ENCODE measurements at regions of chr10 and their contacts with region 1.

Region 1: GRCh38 chr10:2839081-2839725 is 228.1 kb upstream of the PFKP start:
- DNase-seq: peak; percentile 48
- H3K4me3 ChIP-seq: no peak overlapping the region
- H3K27ac ChIP-seq: no peak overlapping the region
- H3K4me1 ChIP-seq: no peaks in the 10 kb centered on the region
- H3K27me3 ChIP-seq: peaks cover 0 to 3% of the 10 kb centered on the region in 2 experiments
- CTCF ChIP-seq: peak; percentile 76 to 78
- POLR2A ChIP-seq: no peak

Region 2: GRCh38 chr10:2978111-2978510 is 138.9 kb after region 1 on chr10:
- CTCF ChIA-PET with region 1: interaction called, 43 read pairs
- POLR2A ChIA-PET with region 1: no interaction called
- dilution Hi-C with region 1: no loop called
- intact Hi-C with region 1: loop called (anchors 1 kb)
- DNase-seq: peak; percentile 61
- H3K4me3 ChIP-seq: no peak overlapping the region
- H3K27ac ChIP-seq: no peak overlapping the region
- H3K4me1 ChIP-seq: no peaks in the 10 kb centered on the region
- H3K27me3 ChIP-seq: no peaks in the 10 kb centered on the region
- CTCF ChIP-seq: peak; percentile 16 to 32
- POLR2A ChIP-seq: no peak

Region 3: GRCh38 chr10:3068201-3068967 is 229.2 kb after region 1 on chr10:
- CTCF ChIA-PET with region 1: no interaction called
- POLR2A ChIA-PET with region 1: no interaction called
- dilution Hi-C with region 1: no loop called
- intact Hi-C with region 1: no loop called
- DNase-seq: peak; percentile 62
- H3K4me3 ChIP-seq: peak overlapping the region; percentile 75 to 96 (median 94)
- H3K27ac ChIP-seq: peak overlapping the region; percentile 73
- H3K4me1 ChIP-seq: peaks cover 43% of the 10 kb centered on the region
- H3K27me3 ChIP-seq: no peaks in the 10 kb centered on the region
- CTCF ChIP-seq: peak; percentile 31 to 53
- POLR2A ChIP-seq: no peak